GM10248 (cell line): ENCODE measurements at regions of chr15 and their contacts with region 1.

Region 1: DNA sequence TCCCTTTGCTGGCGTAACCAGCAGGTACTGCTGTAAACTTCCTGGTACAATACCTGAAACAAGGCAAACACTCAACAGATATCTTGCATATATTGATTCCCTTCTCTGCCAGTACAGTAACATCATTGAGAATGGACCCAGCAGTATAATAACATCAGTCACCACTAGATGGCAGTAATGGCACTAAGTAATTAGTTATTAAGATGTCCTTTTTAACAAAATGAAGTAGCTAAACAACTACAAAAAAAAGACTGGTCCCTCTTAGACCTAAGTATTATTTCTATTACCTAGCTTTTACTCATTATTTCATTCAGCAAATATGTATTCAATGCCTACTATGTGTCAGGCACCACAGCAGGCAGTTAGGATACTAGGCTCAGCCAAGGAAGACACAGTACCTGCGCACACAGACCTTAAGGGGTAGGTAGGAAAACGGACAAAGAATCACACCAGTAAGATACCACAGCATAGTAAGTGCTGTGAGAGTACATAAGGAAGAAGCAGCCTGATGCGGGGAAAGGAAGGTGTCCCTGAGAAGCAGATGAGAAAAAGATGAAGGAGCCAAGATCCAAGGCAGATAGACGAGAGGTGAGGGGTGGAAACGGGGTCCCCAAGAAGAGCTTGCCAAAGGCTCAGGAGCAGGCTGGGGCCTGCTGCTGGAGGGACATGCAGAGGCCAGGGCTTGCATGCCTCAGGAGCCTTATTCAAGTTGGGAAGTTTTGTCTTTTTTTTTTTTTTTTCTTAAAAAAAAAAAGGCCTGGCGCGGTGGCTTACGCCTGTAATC is 102.8 kb upstream of the CHD2 start:
- DNase-seq: peak; percentile 67
- CTCF ChIP-seq: peak; percentile 64

Region 2: DNA sequence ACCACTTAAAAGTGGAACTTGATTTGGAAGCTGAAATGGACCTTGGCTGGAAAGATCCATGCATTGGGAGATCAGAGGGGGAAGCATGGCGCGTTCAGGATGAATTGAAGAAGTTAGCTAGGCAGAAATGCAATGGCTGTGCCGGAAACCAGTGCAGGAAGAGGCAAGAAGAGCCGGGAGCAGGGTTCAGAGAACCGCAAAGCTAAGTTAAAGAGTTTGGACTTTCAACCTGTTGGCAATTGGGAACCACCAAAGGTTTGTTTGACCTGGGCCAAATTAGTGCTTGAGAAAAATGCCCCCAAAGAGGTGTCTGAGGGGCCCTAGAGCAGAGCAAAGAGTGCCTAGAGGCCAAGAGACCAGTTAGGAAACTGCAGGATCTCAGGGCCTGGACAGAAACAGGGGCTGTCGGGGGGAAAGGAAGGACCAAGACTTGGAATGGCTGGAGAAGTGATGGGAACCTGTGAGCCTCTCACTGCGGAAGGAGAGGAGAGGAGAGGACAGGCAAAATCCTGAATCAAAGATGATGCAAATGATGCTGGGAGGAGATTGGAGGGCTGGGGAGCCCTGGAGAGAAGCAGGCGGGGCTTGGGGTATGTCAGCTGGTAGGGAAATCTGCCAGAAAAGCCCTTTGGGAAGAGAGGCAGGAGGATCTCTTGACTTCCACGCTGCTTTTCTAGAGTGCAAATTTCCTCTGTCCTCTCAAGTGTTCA is 191.1 kb before region 1 on chr15:
- CTCF ChIA-PET with region 1: no interaction called
- POLR2A ChIA-PET with region 1: no interaction called
- DNase-seq: no peak
- CTCF ChIP-seq: no peak

Region 3: DNA sequence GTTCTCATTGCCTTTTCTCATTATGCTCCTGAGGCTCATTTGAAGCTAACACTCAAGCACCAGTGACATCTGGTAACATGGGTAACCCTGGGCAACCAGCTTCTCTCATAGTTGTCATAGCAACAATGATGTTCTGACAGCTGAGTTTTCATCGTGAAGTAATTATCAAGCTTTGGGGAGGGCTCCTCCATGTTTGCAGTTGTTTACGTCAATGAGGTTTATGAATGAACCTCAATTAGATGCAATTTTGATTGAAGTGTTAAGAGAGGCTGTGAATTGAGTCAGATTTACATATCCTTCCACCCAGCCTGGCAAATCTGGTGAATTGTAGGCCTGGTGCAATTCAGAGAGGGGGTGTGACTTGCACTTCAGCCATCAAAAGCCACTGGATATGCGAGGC is 16.5 kb before region 1 on chr15:
- CTCF ChIA-PET with region 1: interaction called, 11 read pairs
- POLR2A ChIA-PET with region 1: no interaction called
- DNase-seq: no peak
- CTCF ChIP-seq: no peak

Region 4: GRCh38 chr15:92808978-92809879 is 11.9 kb after region 1 on chr15:
- CTCF ChIA-PET with region 1: interaction called, 38 read pairs
- POLR2A ChIA-PET with region 1: no interaction called
- DNase-seq: peak; percentile 97
- CTCF ChIP-seq: peak; percentile 84

Region 5: GRCh38 chr15:92903941-92904831 is 106.8 kb after region 1 on chr15:
- CTCF ChIA-PET with region 1: interaction called, 17 read pairs
- POLR2A ChIA-PET with region 1: interaction called, 4 read pairs
- DNase-seq: peak; percentile 90
- CTCF ChIP-seq: no peak

Region 6: DNA sequence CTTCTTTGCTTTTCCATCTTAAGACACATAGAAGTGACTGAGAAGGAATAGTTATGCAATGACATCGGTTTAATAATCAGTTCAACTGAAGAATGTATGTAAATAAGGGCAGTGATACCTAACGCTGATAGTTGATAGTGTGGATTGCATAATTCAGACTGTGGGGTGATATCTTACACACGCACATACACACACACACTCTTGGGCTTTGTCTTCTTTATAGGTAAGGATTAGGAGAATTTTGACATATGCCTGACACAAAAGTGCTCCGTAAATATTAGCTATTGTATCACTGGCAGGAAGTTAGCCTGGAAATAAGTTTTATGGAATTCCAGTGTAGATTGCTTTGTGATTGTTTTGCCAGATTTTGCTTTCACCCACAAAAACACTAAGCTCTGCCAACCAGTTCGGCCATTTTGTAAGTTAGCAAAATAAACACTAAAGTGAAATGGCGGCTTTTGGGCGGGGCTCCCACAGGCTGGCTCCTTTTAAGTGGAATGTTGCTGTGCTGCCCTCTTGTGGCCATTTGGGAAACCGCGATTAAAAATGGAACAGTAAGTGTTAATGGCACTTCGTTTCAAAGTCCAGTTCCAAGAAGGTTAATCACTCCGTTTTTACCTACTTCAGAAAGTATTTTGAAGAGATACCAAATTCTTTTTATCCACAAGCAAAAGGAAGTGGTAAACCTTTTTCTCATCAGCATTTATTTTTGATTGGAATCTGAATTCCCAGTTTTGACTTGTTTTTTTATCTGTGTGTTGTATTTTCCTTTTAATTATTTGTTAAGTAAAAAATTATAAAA is 120.4 kb after region 1 on chr15:
- CTCF ChIA-PET with region 1: interaction called, 106 read pairs
- POLR2A ChIA-PET with region 1: interaction called, 6 read pairs
- DNase-seq: peak; percentile 79
- CTCF ChIP-seq: peak; percentile 82

Region 7: DNA sequence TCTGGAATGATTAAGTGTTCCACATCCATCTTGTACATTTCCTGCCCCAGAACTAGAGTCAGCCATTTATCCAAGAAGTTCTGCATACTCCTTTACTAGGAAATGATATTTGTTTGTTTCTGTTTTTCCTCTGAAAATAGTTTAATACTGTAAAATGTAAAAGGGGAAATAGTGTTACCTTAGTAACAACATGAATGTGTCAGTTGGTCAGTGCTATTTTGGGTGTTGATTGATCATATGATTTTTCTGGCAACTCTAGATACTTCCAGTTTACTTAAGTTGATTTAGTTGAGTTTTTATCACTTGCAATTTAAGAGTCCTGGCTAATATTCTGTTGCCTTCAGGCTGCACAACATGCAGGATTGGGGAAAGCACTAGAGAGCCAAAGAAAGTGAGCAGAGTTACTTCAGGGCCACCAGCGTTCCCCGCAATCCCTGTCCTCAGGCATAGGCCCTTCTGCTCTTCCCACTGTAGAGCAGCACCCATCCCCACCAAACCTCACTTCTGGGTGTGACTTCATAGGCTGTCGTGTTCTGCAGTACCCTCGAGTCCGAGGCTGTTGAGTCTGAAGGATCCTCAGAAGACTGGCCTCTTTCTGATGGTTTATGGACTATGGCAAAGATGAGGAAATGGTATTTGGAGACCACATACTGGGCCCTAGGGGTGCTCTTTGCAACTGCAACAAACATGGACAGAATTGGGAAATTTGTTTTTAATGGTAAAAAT is 171.7 kb after region 1 on chr15:
- CTCF ChIA-PET with region 1: interaction called, 11 read pairs
- POLR2A ChIA-PET with region 1: no interaction called
- DNase-seq: no peak
- CTCF ChIP-seq: no peak

Region 8: DNA sequence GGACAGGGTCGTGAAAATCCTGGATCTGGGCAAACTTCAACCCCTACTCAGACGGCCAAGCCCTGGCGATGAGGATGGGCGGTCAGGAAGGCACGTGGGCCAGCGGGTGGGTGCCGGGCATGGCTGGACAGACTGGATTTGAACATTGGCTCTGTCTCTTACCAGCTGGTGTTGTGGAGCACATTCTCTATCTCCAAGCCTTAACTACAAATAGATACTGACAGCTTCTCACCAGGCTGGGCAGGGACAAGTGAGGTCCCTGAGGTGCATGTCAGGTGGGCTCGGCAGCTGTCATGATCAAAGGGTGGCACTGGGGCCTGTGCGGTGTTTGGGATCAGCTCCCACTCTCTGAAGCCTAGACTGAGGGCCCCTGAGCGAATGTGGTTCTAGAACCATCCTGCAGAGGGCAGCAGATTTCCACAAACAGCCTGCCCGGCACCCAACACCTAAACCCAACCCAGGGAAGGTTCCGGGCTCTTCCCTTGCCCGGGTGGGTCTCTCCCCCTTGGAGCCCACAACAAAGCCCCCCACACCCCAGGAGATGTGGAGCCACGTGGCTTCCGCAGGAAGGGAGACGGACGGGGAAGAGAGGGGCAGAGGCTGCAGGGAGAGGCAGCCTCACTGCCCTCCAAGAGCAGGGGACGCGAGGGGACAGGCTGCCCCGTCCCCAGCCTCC is 233.2 kb after region 1 on chr15:
- CTCF ChIA-PET with region 1: interaction called, 15 read pairs
- POLR2A ChIA-PET with region 1: no interaction called
- DNase-seq: peak; percentile 87
- CTCF ChIP-seq: peak; percentile 81